ENCODE measurements at regions of chr7 and their contacts with region 1.

Region 1: DNA sequence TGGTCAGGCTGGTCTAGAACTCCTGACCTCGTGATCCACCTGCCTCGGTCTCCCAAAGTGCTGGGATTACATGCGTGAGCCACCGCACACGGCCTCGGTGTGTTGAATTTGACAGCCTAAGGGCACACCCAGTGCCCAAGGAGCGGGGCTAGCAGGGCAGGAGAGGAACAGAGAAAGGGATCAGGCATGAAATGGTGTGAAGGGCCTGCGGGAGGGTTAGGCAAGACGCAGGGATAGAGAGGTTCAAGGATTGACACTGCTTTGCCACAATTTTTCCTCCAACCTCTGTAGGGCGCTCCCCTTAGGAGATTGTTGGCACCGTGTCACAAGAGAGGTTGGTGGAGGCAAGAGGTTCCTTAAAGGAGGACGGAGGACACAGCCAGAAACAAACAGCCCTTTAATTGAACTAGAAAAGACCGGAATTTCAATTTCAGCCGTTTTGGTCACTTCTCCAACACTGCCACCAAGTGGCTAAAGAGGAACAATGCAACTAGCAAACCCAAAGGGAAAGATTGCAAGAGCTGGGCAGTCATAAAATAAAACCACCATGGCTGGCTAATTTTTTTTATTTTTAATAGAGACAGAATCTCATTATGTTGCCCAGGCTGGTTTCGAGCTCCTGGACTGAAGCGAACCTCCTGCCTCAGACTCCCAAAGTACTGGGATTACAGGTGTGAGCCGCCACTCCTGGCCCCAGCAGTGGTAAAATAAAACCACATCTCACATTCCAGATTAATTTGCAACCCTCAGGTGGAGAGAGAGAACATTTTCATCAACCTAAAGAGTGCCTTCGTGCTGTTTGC is 6.9 kb upstream of the CREB3L2 start:
- DNase-seq: peak; percentile 58
- H3K4me3 ChIP-seq: no peak overlapping the region
- H3K27ac ChIP-seq: no peak overlapping the region
- H3K4me1 ChIP-seq: peaks cover 8% of the 10 kb centered on the region
- H3K27me3 ChIP-seq: no peaks in the 10 kb centered on the region
- CTCF ChIP-seq: peak; percentile 65 to 72
- POLR2A ChIP-seq: no peak

Region 2: GRCh38 chr7:137606061-137606674 is 402.6 kb before region 1 on chr7:
- CTCF ChIA-PET with region 1: interaction called, 10 read pairs
- POLR2A ChIA-PET with region 1: no interaction called
- dilution Hi-C with region 1: no loop called
- intact Hi-C with region 1: loop called (anchors 2 kb)
- DNase-seq: peak; percentile 62
- H3K4me3 ChIP-seq: no peak overlapping the region
- H3K27ac ChIP-seq: no peak overlapping the region
- H3K4me1 ChIP-seq: no peaks in the 10 kb centered on the region
- H3K27me3 ChIP-seq: peaks cover 15 to 24% of the 10 kb centered on the region in 2 experiments
- CTCF ChIP-seq: peak in 1 of 2 donors; percentile 19
- POLR2A ChIP-seq: no peak

Region 3: DNA sequence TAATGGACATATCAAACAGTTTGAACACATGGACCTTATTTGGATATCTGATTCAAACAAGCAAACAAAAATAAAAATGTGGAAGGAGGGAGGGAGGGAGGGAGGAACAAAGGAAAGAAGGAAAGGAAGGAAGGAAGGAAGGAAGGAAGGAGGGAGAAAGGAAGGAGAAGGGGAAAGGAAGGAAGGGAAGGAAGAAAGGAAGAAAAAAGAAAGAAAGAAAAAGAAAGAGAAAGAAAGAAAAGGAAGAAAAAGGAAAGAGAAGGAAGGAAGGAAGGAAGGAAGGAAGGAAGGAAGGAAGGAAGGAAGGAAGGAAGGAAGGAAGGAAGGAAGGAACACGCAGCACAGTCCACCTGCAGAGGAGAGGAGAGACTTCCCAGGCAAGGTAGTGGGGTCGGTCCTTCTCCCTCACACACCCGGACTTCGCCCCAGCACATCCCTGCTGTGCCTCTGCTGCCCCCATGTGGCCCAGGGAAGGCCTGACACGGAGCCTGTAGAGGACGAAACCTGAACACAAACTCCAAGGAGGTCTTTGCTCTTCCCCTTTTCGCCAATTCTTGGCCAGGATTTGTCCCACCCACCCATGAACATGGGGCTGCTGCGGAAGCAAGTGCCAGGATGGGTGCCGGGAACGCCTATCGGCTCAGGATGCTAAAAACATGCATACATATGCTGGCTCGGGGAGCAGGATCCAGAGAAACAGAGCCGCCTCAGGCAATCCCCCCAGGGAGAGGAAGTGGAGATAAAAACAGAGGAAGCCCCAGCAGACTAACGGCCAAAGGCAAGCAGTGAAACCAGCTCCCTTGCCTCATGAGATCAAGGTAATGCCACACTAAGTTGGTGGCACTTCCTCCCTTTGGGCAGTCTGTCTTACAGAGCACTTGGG is 109.7 kb before region 1 on chr7:
- CTCF ChIA-PET with region 1: interaction called, 360 read pairs
- POLR2A ChIA-PET with region 1: interaction called, 3 read pairs
- dilution Hi-C with region 1: no loop called
- intact Hi-C with region 1: loop called (anchors 1 kb)
- DNase-seq: peak; percentile 73
- H3K4me3 ChIP-seq: no peak overlapping the region
- H3K27ac ChIP-seq: no peak overlapping the region
- H3K4me1 ChIP-seq: peaks cover 2% of the 10 kb centered on the region
- H3K27me3 ChIP-seq: no peaks in the 10 kb centered on the region
- CTCF ChIP-seq: peak; percentile 91 to 98
- POLR2A ChIP-seq: no peak

Region 4: GRCh38 chr7:137913985-137914384 is 94.8 kb before region 1 on chr7:
- CTCF ChIA-PET with region 1: interaction called, 14 read pairs
- POLR2A ChIA-PET with region 1: no interaction called
- dilution Hi-C with region 1: no loop called
- intact Hi-C with region 1: no loop called
- DNase-seq: no peak
- H3K4me3 ChIP-seq: no peak overlapping the region
- H3K27ac ChIP-seq: no peak overlapping the region
- H3K4me1 ChIP-seq: no peaks in the 10 kb centered on the region
- H3K27me3 ChIP-seq: no peaks in the 10 kb centered on the region
- CTCF ChIP-seq: no peak
- POLR2A ChIP-seq: no peak

Region 5: GRCh38 chr7:137934941-137935883 is 73.5 kb before region 1 on chr7:
- CTCF ChIA-PET with region 1: interaction called, 12 read pairs
- POLR2A ChIA-PET with region 1: no interaction called
- dilution Hi-C with region 1: no loop called
- intact Hi-C with region 1: loop called (anchors 2 kb)
- DNase-seq: peak; percentile 21
- H3K4me3 ChIP-seq: no peak overlapping the region
- H3K27ac ChIP-seq: no peak overlapping the region
- H3K4me1 ChIP-seq: peaks cover 36% of the 10 kb centered on the region
- H3K27me3 ChIP-seq: no peaks in the 10 kb centered on the region
- CTCF ChIP-seq: no peak
- POLR2A ChIP-seq: no peak

Region 6: DNA sequence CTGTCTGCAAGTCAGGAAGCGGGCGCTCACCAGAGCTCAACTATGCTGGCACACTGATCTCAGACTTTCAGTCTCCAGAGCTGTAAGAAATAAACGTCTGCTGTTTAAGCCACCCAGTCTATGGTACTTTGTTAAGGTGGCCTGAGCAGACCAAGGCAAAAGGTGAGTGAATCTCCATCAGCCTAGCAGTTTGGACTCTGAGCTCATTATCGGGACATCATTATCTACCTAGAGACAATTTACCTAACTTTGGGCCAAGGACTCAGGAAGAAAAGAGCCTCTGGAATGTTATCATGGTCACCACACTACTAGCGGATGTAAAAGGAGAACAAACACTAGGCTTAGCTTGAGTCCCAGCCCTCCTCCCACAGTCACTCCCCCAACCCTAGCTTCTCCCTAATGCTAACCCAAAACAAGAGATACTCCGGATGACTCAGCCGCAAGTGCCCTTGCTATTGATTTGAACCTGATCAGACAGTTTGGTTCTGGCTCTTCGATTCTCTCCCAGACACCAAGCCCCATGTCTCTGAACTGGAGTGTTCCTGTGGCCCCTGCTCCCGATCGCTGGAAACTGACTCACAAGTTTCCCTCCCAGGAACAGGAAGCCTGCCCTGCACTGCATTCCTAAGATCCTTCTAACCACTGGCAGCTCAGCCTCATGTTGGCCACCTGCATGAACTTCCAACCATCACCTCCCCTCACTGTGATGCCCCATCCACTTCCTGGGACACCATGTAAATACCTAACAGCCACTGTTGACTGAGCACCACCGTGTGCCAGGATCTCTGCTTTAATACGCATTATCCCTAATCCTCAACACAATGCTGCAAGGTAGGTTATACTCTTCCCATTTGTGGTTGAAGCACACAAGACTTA is 41.4 kb before region 1 on chr7:
- CTCF ChIA-PET with region 1: interaction called, 18 read pairs
- POLR2A ChIA-PET with region 1: no interaction called
- dilution Hi-C with region 1: no loop called
- intact Hi-C with region 1: no loop called
- DNase-seq: peak; percentile 66
- H3K4me3 ChIP-seq: no peak overlapping the region
- H3K27ac ChIP-seq: peak overlapping the region; percentile 74
- H3K4me1 ChIP-seq: peaks cover 54% of the 10 kb centered on the region
- H3K27me3 ChIP-seq: no peaks in the 10 kb centered on the region
- CTCF ChIP-seq: no peak
- POLR2A ChIP-seq: no peak

Region 7: DNA sequence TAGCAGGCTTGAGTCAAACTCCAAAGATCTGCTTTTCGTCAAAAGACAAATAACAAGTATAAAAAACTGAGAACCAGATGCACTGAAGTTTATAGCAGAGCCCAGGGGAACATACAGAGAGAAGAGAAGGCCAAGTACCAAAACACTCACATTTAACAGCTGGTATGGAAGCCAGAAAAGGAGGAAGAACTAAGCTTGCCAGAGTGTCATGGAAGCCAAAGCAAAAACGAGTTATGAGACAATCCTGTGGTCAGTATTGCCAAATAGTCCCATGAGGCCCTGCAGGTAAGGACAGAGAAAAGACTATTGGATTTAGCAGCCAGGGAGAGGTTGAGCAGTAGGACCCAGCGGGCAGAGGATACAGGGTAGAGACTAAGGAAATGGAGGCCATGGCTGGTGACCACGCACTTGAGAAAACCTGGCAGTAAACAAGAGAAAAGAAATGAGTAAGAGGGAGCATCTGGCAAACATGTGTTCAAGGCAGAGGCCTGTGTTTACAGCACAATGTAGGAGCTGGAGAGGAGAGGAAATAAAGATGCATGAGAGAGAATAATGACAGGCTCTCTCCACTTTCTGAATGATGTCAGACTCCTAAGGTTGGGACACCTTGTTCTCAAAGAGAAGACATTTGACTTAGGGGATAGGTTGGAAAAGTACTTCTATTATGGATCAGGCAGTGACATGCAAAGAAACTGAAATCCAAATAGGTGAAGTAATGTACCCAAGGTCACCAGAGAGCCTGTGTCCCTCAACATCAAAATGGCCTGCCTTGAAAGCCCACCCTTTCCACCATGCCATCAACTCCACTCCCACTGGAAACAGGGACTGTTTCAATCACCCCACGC is 16.0 kb before region 1 on chr7:
- CTCF ChIA-PET with region 1: interaction called, 42 read pairs
- POLR2A ChIA-PET with region 1: no interaction called
- dilution Hi-C with region 1: no loop called
- intact Hi-C with region 1: no loop called
- DNase-seq: peak; percentile 95
- H3K4me3 ChIP-seq: no peak overlapping the region
- H3K27ac ChIP-seq: peak overlapping the region; percentile 92
- H3K4me1 ChIP-seq: peaks cover 75% of the 10 kb centered on the region
- H3K27me3 ChIP-seq: no peaks in the 10 kb centered on the region
- CTCF ChIP-seq: no peak
- POLR2A ChIP-seq: no peak

Region 8: GRCh38 chr7:138151731-138152577 is 143.2 kb after region 1 on chr7:
- CTCF ChIA-PET with region 1: no interaction called
- POLR2A ChIA-PET with region 1: no interaction called
- dilution Hi-C with region 1: no loop called
- intact Hi-C with region 1: no loop called
- DNase-seq: no peak
- H3K4me3 ChIP-seq: no peak overlapping the region
- H3K27ac ChIP-seq: no peak overlapping the region
- H3K4me1 ChIP-seq: no peaks in the 10 kb centered on the region
- H3K27me3 ChIP-seq: no peaks in the 10 kb centered on the region
- CTCF ChIP-seq: no peak
- POLR2A ChIP-seq: no peak